ENCODE measurements at regions of chr1 and their contacts with region 1.

Region 1: DNA sequence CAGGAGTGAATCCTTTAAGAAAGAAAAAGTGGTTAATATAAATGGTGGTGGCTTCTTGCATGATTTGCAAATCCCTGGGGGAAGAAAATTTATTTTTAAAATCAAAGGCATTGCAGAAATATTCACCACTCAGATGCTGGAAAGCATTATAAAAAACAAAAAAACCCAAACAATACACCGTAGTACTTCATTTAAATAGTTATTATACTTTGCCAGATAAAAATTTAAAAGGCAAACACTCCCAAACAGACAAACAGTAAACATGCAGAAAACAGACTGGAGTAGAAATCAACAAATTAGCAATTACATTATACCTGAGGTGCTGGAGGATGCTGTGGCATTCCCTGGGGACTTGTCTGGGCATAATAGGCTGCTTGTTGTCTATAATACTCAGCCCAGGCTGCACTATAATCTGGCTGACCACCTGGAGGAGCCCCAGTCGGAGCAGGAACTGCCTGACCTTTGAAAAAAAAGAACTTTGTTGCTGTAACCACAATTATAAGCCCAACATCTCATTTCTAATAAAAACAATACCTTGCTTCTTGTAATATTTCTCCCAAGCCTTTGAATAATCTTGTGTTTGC is 29.9 kb downstream of the FUBP1 start:
- DNase-seq: no peak
- ATAC-seq: no peak
- H3K4me3 ChIP-seq: no peak overlapping the region
- H3K4me1 ChIP-seq: no peaks in the 10 kb centered on the region
- CTCF ChIP-seq: no peak

Region 2: DNA sequence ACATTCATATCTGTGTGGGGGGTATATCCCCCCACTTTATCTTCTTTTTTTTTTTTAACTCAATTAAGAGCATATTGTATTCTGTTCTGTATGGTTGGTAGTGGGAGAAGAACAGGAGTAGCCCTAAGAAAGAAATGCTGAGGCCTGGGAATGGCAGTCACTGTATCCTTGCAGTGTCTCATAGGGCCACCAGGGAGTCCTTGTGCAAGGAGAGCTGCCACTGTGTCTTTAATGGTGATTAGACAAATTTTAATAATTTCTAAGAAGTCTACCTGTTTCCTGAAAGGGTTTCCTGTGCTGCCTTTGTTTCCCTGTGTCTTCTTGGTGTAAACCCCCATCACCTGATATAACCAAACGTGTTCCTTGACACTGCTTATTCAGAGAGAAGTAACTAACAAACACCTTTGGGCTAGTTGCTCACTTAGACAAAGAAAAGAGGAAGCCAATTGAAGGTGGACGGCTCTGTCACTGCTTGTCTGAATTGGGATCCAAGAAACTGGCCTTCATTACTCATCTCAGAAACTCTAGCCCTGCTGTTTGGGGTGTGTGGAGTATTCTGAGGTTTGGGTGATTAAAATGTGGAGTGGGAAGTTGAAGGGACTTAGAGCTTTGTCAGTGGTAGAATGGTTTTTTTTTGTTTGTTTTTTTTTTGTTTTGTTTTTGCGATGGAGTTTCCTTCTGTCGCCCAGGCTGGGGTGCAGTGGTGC is 112.1 kb after region 1 on chr1:
- intact Hi-C with region 1: no loop called
- DNase-seq: no peak
- ATAC-seq: no peak
- H3K4me3 ChIP-seq: no peak overlapping the region
- H3K4me1 ChIP-seq: no peaks in the 10 kb centered on the region
- CTCF ChIP-seq: no peak

Region 3: GRCh38 chr1:78114034-78114956 is 165.4 kb after region 1 on chr1:
- intact Hi-C with region 1: loop called in 1 of 2 experiments (anchors 10 kb)
- DNase-seq: peak in 2 of 3 donors; percentile 41 to 83
- ATAC-seq: peak; percentile 95
- H3K4me3 ChIP-seq: no peak overlapping the region
- H3K4me1 ChIP-seq: no peaks in the 10 kb centered on the region
- CTCF ChIP-seq: peak; percentile 64

Measured in mucosa of descending colon (tissue), 3 donors.